Activated T-helper 1 cell treated with anti-CD3 and anti-CD28 coated beads, Interleukin-12 subunit alpha, Interleukin-12 subunit beta, Interleukin-2, Interleukin-4 antibody, amounts not matched to agents 30 ng/mL and 10 ng/mL and 1 ng/mL, durations not matched to agents 14 hours and 24 hours and 36 hours (primary cell): ENCODE measurements at regions of chr9 and their contacts with region 1.

Region 1: DNA sequence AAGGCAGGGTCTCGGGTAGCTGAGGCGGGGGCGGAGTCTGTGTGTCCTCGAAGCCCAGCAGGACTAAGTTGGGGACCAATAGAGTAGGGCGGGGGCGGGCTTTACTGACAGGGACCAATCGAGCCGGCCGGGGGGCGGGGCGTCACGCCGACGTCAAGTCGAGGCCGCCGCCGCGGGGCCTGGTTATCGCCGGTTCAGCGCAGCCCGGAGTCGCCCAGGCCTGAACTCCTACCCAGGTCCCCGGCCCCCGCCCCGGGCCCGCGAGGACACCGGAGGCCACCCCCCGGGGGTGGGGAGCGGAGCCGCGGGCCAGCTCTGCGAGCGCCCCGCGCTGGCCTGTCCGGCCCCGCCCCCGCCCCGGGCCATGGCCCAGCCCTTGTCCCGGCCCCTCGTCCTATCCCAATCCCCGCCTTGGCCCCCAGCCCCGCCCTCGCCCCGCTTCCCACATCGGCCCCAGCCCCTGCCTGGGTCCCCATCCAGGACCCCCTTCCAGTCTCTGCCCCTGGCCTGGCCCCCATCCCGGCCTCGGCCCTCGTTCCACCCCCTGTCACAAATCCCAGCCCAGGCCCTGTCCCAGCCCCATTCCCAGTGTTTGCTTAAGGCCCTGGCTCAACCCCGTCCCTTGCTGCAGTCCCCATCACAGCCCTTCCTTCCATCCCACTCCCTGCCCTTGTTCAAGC is at the start of gene TMEM8B:
- DNase-seq: peak; percentile 86
- H3K4me3 Mint-ChIP-seq: peak within 1 kb of the TSS; percentile 91
- H3K27ac Mint-ChIP-seq: peak within 1 kb of the TSS; percentile 89
- H3K4me1 Mint-ChIP-seq: peaks cover 22% of the 10 kb centered on the region
- H3K27me3 Mint-ChIP-seq: peaks cover 3% of the 10 kb centered on the region
- total RNA-seq, gene TMEM8B: 1.7 and 1.9 TPM in 2 replicates

Region 2: DNA sequence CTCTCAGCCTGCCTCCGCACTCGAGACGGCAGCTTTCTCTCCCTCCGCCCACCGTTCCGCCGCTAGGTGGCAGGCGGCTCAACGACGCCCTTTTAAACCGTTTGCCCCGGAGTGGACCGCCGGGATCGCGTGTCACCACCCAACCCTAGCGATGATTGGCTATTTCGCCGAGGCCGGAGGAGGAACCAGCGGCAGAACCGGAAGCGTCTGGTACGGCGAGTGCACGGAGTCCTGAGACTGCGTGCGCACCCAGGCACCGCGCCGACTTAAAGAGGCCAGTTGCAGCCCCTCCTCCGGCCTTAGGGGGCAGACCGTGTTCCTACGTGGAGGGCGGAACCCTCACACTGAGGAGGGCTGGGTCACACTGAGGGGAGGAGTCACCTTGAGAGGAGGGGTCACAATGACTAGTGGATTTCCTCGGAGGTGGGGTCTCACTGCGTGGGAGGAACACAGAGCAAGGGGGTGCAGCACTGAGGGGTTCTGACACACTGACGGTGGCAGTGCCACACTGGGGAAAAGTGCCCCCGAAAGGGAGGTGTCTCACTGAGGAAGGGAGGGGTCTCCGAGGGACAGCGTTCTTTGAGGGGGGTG is 225.1 kb before region 1 on chr9:
- intact Hi-C with region 1: loop called (anchors 2 kb)
- DNase-seq: peak; percentile 99
- H3K4me3 Mint-ChIP-seq: peak overlapping the region; percentile 91
- H3K27ac Mint-ChIP-seq: peak overlapping the region; percentile 99
- H3K4me1 Mint-ChIP-seq: peaks cover 34% of the 10 kb centered on the region
- H3K27me3 Mint-ChIP-seq: peaks cover 2% of the 10 kb centered on the region

Region 3: DNA sequence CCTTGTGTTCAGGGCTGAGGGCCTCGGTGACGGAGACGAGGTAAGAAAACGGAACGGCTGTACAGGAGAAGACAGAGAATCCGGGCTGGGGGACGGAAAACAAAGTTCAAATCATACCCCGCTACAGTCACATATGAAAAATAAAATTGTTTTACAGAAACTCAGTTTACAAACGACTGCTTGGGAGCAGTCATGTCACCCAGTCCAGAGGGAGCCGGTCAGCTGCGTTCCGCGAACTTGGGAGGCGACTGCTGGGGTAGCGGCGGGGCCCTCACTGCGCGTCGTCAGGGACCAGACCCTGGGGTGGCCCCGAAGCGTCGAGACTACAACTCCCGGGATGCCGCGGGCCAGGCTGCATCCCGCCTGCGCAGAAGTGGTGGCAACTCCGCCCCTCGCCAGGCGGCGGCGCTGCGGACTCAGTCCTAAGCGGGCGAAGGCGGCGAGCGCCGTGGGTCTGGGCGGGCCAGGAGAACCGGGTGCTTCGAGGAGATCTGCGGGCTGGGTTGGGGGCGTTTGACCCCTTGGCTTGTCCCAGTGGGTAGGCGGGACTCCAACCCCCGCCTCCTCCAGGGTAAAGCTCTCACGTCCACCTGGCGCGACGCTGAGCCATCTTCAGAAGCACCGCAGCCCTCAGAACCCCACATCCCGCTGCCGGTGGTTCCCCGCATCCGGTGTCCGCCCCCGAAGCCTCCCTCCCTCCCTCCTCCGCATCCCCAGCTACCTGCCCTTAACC is 182.5 kb before region 1 on chr9:
- intact Hi-C with region 1: loop called (anchors 2 kb)
- DNase-seq: peak; percentile 91
- H3K4me3 Mint-ChIP-seq: peak overlapping the region; percentile 92
- H3K27ac Mint-ChIP-seq: peak overlapping the region; percentile 93
- H3K4me1 Mint-ChIP-seq: peaks cover 49% of the 10 kb centered on the region
- H3K27me3 Mint-ChIP-seq: peaks cover 1% of the 10 kb centered on the region

Region 4: DNA sequence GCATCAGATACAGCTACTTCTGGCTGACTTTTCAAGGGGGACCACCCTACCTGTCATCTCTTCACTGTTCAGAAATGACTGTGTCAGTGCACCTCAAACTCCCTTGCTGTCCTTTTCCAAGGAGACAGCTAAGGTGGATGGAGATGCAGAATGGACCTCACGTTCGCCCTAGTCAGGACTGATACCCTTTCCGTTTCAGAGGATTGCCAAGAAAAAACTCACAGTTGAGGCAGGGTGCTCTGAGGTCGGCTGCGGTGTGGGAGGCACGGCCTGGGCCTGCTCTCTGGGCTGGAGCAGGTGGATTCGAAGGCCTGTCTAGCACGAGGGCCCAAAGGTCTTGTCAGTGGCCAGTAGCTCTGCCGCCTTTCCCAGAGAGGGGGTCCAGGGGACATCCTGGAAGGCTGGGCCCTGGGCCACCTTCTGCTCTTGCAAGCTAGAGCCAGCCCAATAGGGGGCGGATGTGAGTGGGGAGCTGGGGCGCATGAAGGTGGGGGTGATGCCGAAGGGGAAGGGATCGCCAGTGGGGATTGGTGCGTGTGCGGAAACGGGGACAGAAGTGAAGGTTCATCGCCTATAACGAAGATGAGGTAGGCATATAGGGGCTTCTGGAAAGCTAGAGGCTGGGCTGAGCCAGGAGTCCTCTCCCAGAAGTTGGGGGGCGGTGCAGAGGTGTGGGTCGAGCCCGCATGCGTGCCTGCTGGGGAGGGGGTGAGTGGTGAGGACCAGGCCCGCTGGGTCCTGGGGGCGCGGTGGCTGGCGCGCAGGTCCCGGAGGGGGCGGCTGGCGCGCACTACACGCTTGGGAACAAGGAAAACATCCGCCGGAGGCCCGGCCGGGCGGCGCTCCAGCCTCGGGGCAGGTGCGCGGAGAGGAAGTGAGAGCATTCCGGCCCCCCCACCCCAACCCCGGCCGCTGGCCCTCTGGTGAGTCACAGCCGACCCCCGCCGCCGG is 72.7 kb before region 1 on chr9:
- intact Hi-C with region 1: loop called (anchors 1 kb)
- DNase-seq: peak; percentile 71
- H3K4me3 Mint-ChIP-seq: peak overlapping the region; percentile 100
- H3K27ac Mint-ChIP-seq: peak overlapping the region; percentile 98
- H3K4me1 Mint-ChIP-seq: peaks cover 51% of the 10 kb centered on the region
- H3K27me3 Mint-ChIP-seq: no peaks in the 10 kb centered on the region

Region 5: GRCh38 chr9:35774907-35775635 is 54.2 kb before region 1 on chr9:
- intact Hi-C with region 1: no loop called
- DNase-seq: no peak
- H3K4me3 Mint-ChIP-seq: no peak overlapping the region
- H3K27ac Mint-ChIP-seq: peak overlapping the region; percentile 25
- H3K4me1 Mint-ChIP-seq: peaks cover 13% of the 10 kb centered on the region
- H3K27me3 Mint-ChIP-seq: no peaks in the 10 kb centered on the region

Region 6: DNA sequence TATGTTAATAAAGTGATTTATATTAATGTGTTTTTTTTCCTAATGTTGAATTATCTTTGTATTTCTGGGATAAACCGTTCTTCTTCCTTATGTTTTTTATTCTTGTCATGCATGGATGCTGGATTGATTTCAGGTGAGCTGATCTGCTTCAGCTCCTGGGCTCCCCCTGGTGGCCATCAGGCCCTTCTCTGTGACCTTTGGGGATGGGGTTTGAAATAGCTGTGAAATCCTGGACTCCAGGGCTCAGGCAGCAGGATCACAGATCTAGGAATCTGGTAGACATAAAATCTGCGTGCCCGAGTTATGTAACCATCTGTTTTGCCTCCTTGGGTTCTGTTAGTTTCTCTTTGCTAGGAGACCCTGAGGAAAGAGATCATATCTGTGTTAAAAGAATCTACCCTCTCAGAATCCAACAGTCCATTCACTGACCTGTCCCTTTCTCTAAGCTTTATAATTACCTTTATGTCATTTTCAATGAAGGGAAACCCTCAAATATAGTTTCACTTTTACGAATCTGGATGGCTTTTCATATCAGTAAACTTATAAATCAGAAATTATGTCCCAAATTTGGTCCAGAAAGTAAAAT is 53.1 kb after region 1 on chr9:
- intact Hi-C with region 1: loop called (anchors 1 kb)
- DNase-seq: peak; percentile 55
- H3K4me3 Mint-ChIP-seq: no peak overlapping the region
- H3K27ac Mint-ChIP-seq: no peak overlapping the region
- H3K4me1 Mint-ChIP-seq: no peaks in the 10 kb centered on the region
- H3K27me3 Mint-ChIP-seq: peaks cover 22% of the 10 kb centered on the region

Region 7: DNA sequence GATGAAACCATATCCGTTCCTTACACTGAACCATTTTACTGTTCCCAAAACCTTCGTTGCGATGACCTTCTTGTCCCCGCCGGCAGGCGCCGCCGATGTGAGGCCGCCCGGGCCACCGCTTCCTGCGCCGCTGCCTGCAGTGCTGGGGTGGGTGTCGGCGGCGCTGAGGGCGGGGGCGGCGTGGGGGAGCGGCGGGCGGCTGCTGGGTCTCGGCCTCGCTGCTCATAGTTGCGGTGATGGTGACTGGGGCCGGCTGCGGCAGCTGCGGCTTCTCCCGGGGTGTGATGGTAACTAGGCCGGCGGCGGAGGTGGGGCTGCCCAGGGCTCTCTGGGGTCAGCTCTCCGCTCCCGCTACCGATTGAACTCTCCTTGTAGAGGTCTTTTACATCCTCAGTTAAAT is 142.9 kb after region 1 on chr9:
- intact Hi-C with region 1: no loop called
- DNase-seq: no peak
- H3K4me3 Mint-ChIP-seq: no peak overlapping the region
- H3K27ac Mint-ChIP-seq: no peak overlapping the region
- H3K4me1 Mint-ChIP-seq: no peaks in the 10 kb centered on the region
- H3K27me3 Mint-ChIP-seq: peaks cover 76% of the 10 kb centered on the region

Region 8: GRCh38 chr9:36400332-36401163 is 571.3 kb after region 1 on chr9:
- intact Hi-C with region 1: loop called (anchors 10 kb)
- DNase-seq: peak; percentile 86
- H3K4me3 Mint-ChIP-seq: peak overlapping the region; percentile 89
- H3K27ac Mint-ChIP-seq: peak overlapping the region; percentile 97
- H3K4me1 Mint-ChIP-seq: peaks cover 47% of the 10 kb centered on the region
- H3K27me3 Mint-ChIP-seq: no peaks in the 10 kb centered on the region